CD4-positive, alpha-beta memory T cell (primary cell): ENCODE measurements at regions of chr17 and their contacts with region 1.

Region 1: DNA sequence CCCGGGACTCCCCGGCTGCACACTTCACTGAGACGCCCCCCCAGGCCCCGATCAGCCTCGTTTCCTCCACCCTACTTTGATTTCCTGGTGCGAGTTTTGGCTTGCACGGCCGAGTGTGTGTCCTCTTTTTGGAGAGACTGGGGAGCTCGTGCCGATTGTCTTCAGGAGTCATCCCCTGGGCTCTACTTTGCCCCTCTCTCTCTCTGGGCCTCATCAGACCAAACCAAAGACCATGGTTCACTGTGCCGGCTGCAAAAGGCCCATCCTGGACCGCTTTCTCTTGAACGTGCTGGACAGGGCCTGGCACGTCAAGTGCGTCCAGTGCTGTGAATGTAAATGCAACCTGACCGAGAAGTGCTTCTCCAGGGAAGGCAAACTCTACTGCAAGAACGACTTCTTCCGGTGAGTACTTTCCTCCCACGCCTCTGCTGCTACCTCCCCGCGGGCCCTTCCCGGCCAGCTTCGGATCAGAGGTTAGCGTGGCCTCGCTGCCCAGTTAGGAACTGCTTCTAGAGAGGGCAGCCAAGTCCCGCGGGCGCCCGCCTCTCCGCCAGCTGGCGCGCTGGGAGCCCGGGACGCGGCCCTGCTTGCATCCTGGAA is 791 bp downstream of the LHX1 start:
- DNase-seq: peak in 2 of 5 donors; percentile 40 to 43
- H3K4me3 ChIP-seq: no peak overlapping the region
- H3K4me3 Mint-ChIP-seq: peak overlapping the region; percentile 71 to 88 (median 83)
- H3K27ac ChIP-seq: no peak overlapping the region
- H3K27ac Mint-ChIP-seq: peak overlapping the region in 5 of 7 donors; percentile 53 to 86 (median 78)
- H3K4me1 ChIP-seq: peaks cover 83% of the 10 kb centered on the region
- H3K4me1 Mint-ChIP-seq: peaks cover 37 to 79% (median 56%) of the 10 kb centered on the region in 4 donors
- H3K27me3 ChIP-seq: peaks cover 97% of the 10 kb centered on the region
- H3K27me3 Mint-ChIP-seq: peaks cover 66% of the 10 kb centered on the region in 2 donors

Region 2: GRCh38 chr17:36566081-36566480 is 372.0 kb before region 1 on chr17:
- CTCF ChIA-PET with region 1: no interaction called
- POLR2A ChIA-PET with region 1: no interaction called
- intact Hi-C with region 1: no loop called
- DNase-seq: no peak
- H3K4me3 ChIP-seq: no peak overlapping the region
- H3K4me3 Mint-ChIP-seq: no peak overlapping the region
- H3K27ac ChIP-seq: no peak overlapping the region
- H3K27ac Mint-ChIP-seq: peak overlapping the region in 4 of 7 donors; percentile 4 to 38 (median 25)
- H3K4me1 ChIP-seq: peaks cover 9% of the 10 kb centered on the region
- H3K4me1 Mint-ChIP-seq: peaks cover 11 to 32% (median 17%) of the 10 kb centered on the region in 4 donors
- H3K27me3 ChIP-seq: no peaks in the 10 kb centered on the region
- H3K27me3 Mint-ChIP-seq: no peaks in the 10 kb centered on the region

Region 3: DNA sequence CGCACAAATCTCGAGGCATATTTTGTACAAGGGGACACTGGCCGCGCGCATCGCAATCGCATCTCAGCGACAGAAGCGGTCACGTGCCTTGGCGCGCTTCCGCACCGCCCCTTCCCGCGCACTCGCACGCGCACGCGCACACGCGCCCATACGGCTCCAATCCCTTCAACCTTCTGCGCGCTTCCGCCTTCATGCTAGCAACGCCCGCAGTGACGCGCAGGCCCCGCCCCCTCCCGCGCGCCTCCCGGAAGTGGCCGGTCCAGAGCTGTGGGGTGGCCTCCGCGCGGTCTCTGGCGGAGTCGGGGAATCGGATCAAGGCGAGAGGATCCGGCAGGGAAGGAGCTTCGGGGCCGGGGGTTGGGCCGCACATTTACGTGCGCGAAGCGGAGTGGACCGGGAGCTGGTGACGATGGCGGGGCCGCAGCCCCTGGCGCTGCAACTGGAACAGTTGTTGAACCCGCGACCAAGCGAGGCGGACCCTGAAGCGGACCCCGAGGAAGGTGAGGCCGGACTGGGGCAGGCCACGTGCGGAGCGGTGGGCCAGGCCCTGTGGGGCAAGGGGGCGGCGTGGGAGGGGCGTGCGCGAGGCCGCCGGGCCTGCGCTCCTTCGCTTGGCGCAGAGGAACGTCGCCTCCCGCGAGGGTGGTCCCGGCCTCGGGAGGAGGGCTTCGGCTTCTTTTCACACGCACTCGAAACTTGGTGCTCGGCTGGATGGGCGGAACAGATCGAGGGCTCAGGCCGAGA is 10.8 kb after region 1 on chr17 and contains the start of gene AATF:
- CTCF ChIA-PET with region 1: interaction called, 4 read pairs
- POLR2A ChIA-PET with region 1: interaction called, 17 read pairs
- intact Hi-C with region 1: no loop called
- DNase-seq: peak; percentile 94 to 97 (median 96)
- H3K4me3 ChIP-seq: peak within 1 kb of the TSS; percentile 68 to 89
- H3K4me3 Mint-ChIP-seq: peak within 1 kb of the TSS; percentile 87 to 98 (median 97)
- H3K27ac ChIP-seq: peak within 1 kb of the TSS; percentile 86
- H3K27ac Mint-ChIP-seq: peak within 1 kb of the TSS; percentile 85 to 98 (median 96)
- H3K4me1 ChIP-seq: peaks cover 47% of the 10 kb centered on the region
- H3K4me1 Mint-ChIP-seq: peaks cover 31 to 63% (median 46%) of the 10 kb centered on the region in 4 donors
- H3K27me3 ChIP-seq: peaks cover 35% of the 10 kb centered on the region
- H3K27me3 Mint-ChIP-seq: peaks cover 24 to 27% of the 10 kb centered on the region in 2 donors
- total RNA-seq, gene AATF: 60.5 to 61.2 TPM

Region 4: DNA sequence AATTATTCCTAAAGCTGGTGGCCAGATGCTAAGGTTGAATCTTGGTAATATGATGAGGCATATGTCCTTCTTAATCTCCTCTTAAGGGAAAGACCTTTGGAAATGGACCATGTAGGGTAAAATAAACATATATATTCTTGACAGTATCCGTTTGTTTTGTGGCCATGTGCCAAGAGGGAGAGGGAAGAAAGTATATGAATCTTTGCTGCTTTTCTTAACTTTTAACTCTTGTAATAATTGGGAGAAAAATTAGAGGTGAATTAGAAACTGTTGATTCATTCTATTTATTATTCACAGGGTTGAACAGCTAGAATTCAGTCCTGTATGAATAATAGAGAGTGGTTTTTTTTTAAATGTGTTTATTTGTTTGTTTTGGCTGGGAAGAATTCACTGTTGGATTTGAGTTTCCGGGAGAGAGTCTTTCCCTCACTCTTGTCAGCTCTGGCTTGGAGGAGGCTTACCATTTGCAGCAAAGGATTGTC is 42.3 kb after region 1 on chr17:
- CTCF ChIA-PET with region 1: no interaction called
- POLR2A ChIA-PET with region 1: no interaction called
- intact Hi-C with region 1: no loop called
- DNase-seq: no peak
- H3K4me3 ChIP-seq: no peak overlapping the region
- H3K4me3 Mint-ChIP-seq: no peak overlapping the region
- H3K27ac ChIP-seq: no peak overlapping the region
- H3K27ac Mint-ChIP-seq: peak overlapping the region in 2 of 7 donors; percentile 24 to 50
- H3K4me1 ChIP-seq: peaks cover 3% of the 10 kb centered on the region
- H3K4me1 Mint-ChIP-seq: peaks cover 26 to 55% (median 33%) of the 10 kb centered on the region in 4 donors
- H3K27me3 ChIP-seq: no peaks in the 10 kb centered on the region
- H3K27me3 Mint-ChIP-seq: no peaks in the 10 kb centered on the region

Region 5: GRCh38 chr17:37017404-37017803 is 79.3 kb after region 1 on chr17:
- CTCF ChIA-PET with region 1: no interaction called
- POLR2A ChIA-PET with region 1: no interaction called
- intact Hi-C with region 1: no loop called
- DNase-seq: no peak
- H3K4me3 ChIP-seq: no peak overlapping the region
- H3K4me3 Mint-ChIP-seq: no peak overlapping the region
- H3K27ac ChIP-seq: no peak overlapping the region
- H3K27ac Mint-ChIP-seq: peak overlapping the region in 2 of 7 donors; percentile 38 to 62
- H3K4me1 ChIP-seq: no peaks in the 10 kb centered on the region
- H3K4me1 Mint-ChIP-seq: peaks cover 0 to 11% (median 9%) of the 10 kb centered on the region in 4 donors
- H3K27me3 ChIP-seq: no peaks in the 10 kb centered on the region
- H3K27me3 Mint-ChIP-seq: no peaks in the 10 kb centered on the region